Activated T-helper 2 cell treated with anti-CD3 and anti-CD28 coated beads, Interferon-gamma antibody, Interleukin-2, Interleukin-4, amounts not matched to agents 10 μg/mL and 5 μg/mL and 100 μg/mL, durations not matched to agents 14 hours and 24 hours and 36 hours (primary cell): ENCODE measurements at regions of chr11 and their contacts with region 1.

Region 1: GRCh38 chr11:76734456-76735420 is 48.4 kb upstream of the TSKU start:
- DNase-seq: no peak
- H3K4me3 Mint-ChIP-seq: no peak overlapping the region
- H3K27ac Mint-ChIP-seq: no peak overlapping the region
- H3K4me1 Mint-ChIP-seq: peaks cover 2% of the 10 kb centered on the region
- H3K27me3 Mint-ChIP-seq: peaks cover 5% of the 10 kb centered on the region

Region 2: GRCh38 chr11:76782526-76783293 is 48.0 kb after region 1 on chr11:
- intact Hi-C with region 1: loop called (anchors 5 kb)
- DNase-seq: peak; percentile 60
- H3K4me3 Mint-ChIP-seq: peak overlapping the region; percentile 80
- H3K27ac Mint-ChIP-seq: peak overlapping the region; percentile 76
- H3K4me1 Mint-ChIP-seq: peaks cover 22% of the 10 kb centered on the region
- H3K27me3 Mint-ChIP-seq: peaks cover 20% of the 10 kb centered on the region

Region 3: GRCh38 chr11:76799066-76799804 is 64.5 kb after region 1 on chr11:
- intact Hi-C with region 1: loop called (anchors 1 kb)
- DNase-seq: peak; percentile 66
- H3K4me3 Mint-ChIP-seq: peak overlapping the region; percentile 21
- H3K27ac Mint-ChIP-seq: no peak overlapping the region
- H3K4me1 Mint-ChIP-seq: peaks cover 16% of the 10 kb centered on the region
- H3K27me3 Mint-ChIP-seq: peaks cover 7% of the 10 kb centered on the region

Region 4: DNA sequence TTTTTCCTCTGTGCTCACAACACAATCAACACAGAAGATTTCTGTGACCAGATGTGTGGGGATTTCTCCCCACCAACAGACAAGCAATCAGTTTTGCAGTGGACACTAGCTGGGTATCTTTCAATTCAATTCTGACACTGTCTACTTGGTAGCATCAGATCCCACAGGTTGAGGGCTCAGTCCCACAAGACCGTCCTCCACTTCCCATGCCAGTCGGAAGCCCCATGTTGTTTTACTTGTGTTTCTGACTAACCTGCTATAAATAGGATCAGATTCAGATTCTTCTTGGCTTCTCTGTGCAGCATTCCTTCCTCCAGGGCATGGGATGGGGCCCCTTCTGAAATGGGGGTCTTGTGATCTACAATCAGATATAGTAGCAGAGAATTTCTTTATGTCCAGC is 145.6 kb after region 1 on chr11:
- intact Hi-C with region 1: no loop called
- DNase-seq: no peak
- H3K4me3 Mint-ChIP-seq: no peak overlapping the region
- H3K27ac Mint-ChIP-seq: no peak overlapping the region
- H3K4me1 Mint-ChIP-seq: peaks cover 19% of the 10 kb centered on the region
- H3K27me3 Mint-ChIP-seq: no peaks in the 10 kb centered on the region

Region 5: DNA sequence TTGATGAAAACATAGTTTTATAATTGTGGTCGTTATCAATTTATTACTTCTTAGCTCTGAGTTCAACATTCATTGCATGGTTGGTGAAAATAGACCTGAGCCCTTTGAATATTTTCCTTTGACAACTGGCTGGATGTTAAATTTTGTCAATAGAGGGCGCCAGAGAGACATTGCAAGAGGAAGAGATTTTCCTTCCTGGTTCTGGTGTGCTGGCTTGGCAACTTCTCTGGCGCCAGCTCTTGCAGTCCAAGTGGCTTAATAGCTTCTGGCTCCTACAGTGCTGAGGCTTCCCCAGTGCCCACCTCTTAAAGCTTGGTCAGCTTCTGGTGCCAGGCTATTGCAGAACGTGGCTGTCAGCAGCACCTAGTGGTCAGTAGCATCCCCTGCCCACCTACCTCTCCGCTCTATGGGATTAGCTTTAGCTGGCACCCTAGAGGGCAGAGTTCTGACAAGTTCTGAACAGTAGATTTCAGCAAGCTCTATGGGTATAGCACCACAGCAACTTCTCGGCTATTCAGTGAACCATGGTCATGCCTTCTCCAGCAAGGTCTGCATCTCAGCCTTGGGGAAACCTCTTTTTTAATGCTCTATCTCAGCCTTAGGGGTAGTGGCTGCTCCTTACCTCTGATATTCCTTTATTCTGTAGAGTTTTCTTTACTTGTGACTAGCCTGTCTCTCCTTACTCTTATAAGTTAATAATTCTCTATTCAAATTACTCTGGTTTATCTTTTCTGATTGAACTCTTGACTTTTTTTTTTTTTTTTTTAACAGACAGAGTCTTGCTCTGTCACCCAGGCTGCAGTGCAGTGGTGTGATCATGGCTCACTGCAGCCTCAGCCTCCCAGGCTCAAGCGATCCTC is 185.4 kb after region 1 on chr11:
- intact Hi-C with region 1: loop called (anchors 1 kb)
- DNase-seq: peak; percentile 49
- H3K4me3 Mint-ChIP-seq: no peak overlapping the region
- H3K27ac Mint-ChIP-seq: no peak overlapping the region
- H3K4me1 Mint-ChIP-seq: peaks cover 14% of the 10 kb centered on the region
- H3K27me3 Mint-ChIP-seq: peaks cover 3% of the 10 kb centered on the region

Region 6: DNA sequence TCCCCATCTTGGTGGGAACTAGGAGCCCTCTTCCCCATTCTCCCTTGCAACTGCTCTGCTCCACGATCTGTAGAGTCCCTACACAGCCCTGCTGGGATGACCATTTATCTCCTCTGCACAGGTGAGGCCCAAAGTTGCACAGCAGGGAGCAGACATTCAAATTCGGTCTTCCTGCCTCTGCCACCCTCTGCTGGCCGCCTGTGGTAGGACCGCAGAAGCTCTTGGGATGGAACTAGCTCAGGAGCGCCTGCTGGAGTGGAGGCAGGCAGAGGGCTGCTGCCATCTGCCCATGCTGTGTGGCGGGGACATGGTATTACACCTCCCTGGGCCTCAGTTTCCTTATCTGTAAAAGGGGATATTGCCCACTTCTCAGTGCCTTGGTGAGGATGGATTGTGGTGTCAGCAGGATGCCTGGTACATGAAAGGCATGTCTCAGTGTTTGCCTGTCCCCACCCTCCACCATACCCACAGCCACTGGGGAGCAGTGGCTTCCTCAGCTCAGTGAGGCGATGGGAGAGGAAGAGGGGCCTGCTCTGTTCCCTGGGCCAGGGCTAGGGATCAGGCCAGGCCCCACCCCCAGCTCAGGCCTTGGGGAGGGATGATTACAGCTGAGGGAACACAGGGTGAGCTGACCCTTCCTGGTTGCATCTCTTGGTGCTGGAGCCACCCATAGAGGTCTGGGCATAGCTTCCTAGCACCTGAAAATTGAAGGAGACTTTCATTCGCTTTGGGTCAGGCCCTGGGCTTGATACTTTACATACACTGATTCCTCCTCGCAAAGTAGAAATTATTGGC is 356.6 kb after region 1 on chr11:
- intact Hi-C with region 1: loop called (anchors 5 kb)
- DNase-seq: peak; percentile 70
- H3K4me3 Mint-ChIP-seq: no peak overlapping the region
- H3K27ac Mint-ChIP-seq: no peak overlapping the region
- H3K4me1 Mint-ChIP-seq: peaks cover 6% of the 10 kb centered on the region
- H3K27me3 Mint-ChIP-seq: no peaks in the 10 kb centered on the region